AG04449 (cell line): ENCODE measurements at regions of chr2 and their contacts with region 1.

Region 1: GRCh38 chr2:192162392-192163042 is 32.2 kb downstream of the TMEFF2 start:
- DNase-seq: no peak
- H3K4me3 ChIP-seq: no peak overlapping the region
- CTCF ChIP-seq: peak; percentile 72

Region 2: GRCh38 chr2:191555092-191555742 is 607.3 kb before region 1 on chr2:
- CTCF ChIA-PET with region 1: interaction called, 65 read pairs
- POLR2A ChIA-PET with region 1: no interaction called
- DNase-seq: no peak
- H3K4me3 ChIP-seq: no peak overlapping the region
- CTCF ChIP-seq: peak; percentile 61

Region 3: DNA sequence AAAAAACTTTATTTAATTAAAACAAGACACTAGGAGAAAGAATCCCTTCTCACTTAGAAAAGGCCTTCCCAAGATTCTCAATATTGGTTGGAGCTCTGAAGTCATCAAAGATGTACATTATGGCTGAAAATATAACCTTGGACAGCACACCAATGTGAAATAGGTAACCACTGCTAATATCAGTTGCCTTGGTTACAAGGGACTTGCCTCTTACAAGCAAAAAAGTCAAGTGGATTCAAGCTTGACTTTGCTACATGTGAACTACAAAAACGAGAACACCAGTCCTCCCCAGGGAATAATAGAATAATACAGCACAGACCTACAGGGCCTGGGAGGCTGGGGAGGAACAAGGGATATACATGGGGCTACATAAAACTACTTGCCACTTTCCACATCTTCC is 438.5 kb before region 1 on chr2:
- CTCF ChIA-PET with region 1: no interaction called
- POLR2A ChIA-PET with region 1: no interaction called
- DNase-seq: no peak
- H3K4me3 ChIP-seq: no peak overlapping the region
- CTCF ChIP-seq: no peak

Region 4: DNA sequence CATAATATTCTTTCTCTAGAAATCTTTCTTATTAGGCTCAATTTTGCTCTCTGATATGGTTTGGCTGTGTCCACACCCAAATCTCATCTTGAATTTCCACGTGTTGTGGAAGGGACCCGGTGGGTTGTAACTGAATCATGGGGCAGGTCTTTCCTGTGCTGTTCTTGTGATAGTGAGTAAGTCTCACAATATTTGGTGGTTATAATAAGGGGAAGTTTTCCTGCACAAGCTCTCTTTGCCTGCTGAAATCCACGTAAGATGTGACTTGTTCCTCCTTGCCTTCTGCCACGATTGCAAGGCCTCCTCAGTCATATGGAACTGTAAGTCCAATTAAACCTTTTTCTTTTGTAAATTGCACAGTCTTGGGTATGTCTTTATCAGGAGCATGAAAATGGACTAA is 389.4 kb before region 1 on chr2:
- CTCF ChIA-PET with region 1: interaction called, 10 read pairs
- POLR2A ChIA-PET with region 1: no interaction called
- DNase-seq: no peak
- H3K4me3 ChIP-seq: no peak overlapping the region
- CTCF ChIP-seq: no peak

Region 5: GRCh38 chr2:191824398-191824797 is 338.1 kb before region 1 on chr2:
- CTCF ChIA-PET with region 1: interaction called, 601 read pairs
- POLR2A ChIA-PET with region 1: interaction called, 4 read pairs
- DNase-seq: no peak
- H3K4me3 ChIP-seq: no peak overlapping the region
- CTCF ChIP-seq: no peak

Region 6: GRCh38 chr2:191869178-191869577 is 293.3 kb before region 1 on chr2:
- CTCF ChIA-PET with region 1: interaction called, 92 read pairs
- POLR2A ChIA-PET with region 1: no interaction called
- DNase-seq: no peak
- H3K4me3 ChIP-seq: no peak overlapping the region
- CTCF ChIP-seq: peak; percentile 32

Region 7: DNA sequence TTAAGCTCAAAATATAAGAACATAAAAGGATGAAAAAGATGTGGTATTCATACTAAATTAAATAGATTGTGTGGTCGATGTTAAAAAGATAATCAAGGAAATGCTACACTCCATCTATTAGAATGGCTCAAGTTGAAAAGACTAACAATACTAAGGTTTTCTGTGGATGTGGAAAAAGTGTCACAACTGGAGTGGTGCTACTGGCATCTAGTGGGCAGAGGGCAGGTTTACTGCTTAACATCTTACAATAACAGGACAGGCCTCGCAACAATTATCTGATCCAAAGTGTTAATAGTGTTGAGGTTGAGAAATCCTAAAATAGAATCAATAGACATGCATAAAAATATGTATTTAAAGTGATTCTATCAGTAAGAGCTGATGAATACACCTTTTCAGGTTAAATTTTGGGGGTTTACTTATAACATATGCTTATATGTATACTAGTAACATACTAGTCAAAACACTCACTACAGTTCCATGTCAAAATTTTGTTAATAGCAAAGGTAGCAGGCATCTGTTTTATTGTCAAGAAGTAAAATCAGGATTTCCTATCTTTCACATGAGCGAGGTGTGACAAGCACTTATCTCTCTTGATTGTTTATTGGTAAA is 123.7 kb after region 1 on chr2:
- CTCF ChIA-PET with region 1: interaction called, 15 read pairs
- POLR2A ChIA-PET with region 1: no interaction called
- DNase-seq: peak; percentile 5
- H3K4me3 ChIP-seq: no peak overlapping the region
- CTCF ChIP-seq: peak; percentile 51